ENCODE measurements at regions of chr1 and their contacts with region 1.

Region 1: GRCh38 chr1:201511941-201512539 is 5.1 kb upstream of the CSRP1 start:
- DNase-seq: no peak
- H3K4me3 ChIP-seq: no peak overlapping the region
- H3K27ac ChIP-seq: no peak overlapping the region
- H3K27me3 ChIP-seq: no peaks in the 10 kb centered on the region
- CTCF ChIP-seq: no peak

Region 2: DNA sequence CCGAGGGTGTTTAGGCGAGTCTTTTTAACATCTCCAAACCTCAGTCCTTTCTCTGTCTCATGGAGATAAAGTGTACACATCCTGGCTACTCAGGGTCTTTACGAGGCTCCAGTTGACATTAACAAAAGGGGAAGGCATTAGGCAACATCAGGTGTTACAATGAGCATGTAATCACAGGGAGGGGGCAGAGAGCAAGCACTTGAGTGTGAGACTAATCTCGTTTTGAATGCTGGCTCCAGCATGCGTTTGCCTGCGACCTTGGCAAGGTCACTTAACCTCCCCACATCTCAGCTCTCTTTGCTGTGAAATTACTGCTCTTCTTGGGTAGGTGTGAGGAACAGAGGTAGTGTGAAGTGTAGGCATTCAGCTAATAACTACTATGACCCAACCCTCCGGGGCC is 137.7 kb before region 1 on chr1:
- CTCF ChIA-PET with region 1: no interaction called
- POLR2A ChIA-PET with region 1: no interaction called
- DNase-seq: no peak
- H3K4me3 ChIP-seq: no peak overlapping the region
- H3K27ac ChIP-seq: no peak overlapping the region
- H3K27me3 ChIP-seq: peaks cover 53% of the 10 kb centered on the region
- CTCF ChIP-seq: no peak

Region 3: GRCh38 chr1:201436393-201436792 is 75.6 kb before region 1 on chr1:
- CTCF ChIA-PET with region 1: interaction called, 135 read pairs
- POLR2A ChIA-PET with region 1: interaction called, 4 read pairs
- DNase-seq: no peak
- H3K4me3 ChIP-seq: no peak overlapping the region
- H3K27ac ChIP-seq: no peak overlapping the region
- H3K27me3 ChIP-seq: peaks cover 4% of the 10 kb centered on the region
- CTCF ChIP-seq: peak; percentile 36

Region 4: GRCh38 chr1:201456499-201457309 is 55.3 kb before region 1 on chr1:
- CTCF ChIA-PET with region 1: interaction called, 20 read pairs
- POLR2A ChIA-PET with region 1: interaction called, 7 read pairs
- DNase-seq: peak; percentile 88
- H3K4me3 ChIP-seq: no peak overlapping the region; the same call in 1 of the 2 replicates
- H3K27ac ChIP-seq: peak overlapping the region; percentile 95
- H3K27me3 ChIP-seq: no peaks in the 10 kb centered on the region
- CTCF ChIP-seq: no peak

Region 5: GRCh38 chr1:201476670-201477344 is 35.2 kb before region 1 on chr1:
- CTCF ChIA-PET with region 1: interaction called, 307 read pairs
- POLR2A ChIA-PET with region 1: interaction called, 21 read pairs
- DNase-seq: no peak
- H3K4me3 ChIP-seq: no peak overlapping the region
- H3K27ac ChIP-seq: no peak overlapping the region
- H3K27me3 ChIP-seq: no peaks in the 10 kb centered on the region
- CTCF ChIP-seq: no peak

Region 6: DNA sequence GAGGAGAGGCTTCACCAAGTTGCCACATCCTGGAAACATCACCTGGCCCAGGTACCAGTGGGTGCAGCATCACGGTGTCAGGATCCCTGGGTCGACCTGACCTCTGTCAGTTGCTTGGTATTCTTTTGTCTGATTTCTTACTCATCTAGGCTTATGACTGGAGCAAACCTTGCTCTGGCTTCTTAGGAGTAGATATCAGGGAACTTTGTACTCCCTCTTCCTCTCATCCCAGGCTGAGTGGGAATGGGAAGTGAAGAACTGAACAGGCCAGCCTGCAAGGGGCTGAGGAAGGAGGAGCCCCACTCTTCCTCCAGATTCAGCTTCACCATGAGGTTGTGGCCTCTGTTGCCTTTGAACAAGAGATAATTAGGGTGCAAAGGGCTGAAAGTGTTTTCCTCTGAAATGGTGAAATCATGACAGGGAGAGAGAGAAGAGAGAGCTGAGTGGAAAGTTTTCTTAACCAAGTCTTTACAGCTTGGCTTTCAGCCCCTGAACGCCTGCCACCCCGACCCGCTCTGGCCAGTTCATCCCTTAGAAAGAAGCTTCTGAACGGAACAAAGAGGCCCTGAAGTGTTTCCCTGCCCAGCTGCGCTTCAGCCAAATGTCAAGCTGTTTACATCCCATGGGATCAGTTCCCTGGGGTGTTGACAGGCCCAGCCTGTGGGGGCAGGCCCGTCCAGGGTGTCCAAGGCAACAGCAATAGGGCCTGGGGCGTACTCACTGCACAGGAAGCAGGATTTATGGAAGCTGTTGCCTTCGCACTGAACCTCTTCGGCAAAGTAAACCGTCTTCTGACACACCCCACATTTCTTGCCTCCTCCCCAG is 16.4 kb before region 1 on chr1:
- CTCF ChIA-PET with region 1: interaction called, 307 read pairs
- POLR2A ChIA-PET with region 1: interaction called, 4 read pairs
- DNase-seq: no peak
- H3K4me3 ChIP-seq: peak overlapping the region; percentile 7; the same call in 1 of the 2 replicates
- H3K27ac ChIP-seq: peak overlapping the region; percentile 81
- H3K27me3 ChIP-seq: no peaks in the 10 kb centered on the region
- CTCF ChIP-seq: no peak

Region 7: DNA sequence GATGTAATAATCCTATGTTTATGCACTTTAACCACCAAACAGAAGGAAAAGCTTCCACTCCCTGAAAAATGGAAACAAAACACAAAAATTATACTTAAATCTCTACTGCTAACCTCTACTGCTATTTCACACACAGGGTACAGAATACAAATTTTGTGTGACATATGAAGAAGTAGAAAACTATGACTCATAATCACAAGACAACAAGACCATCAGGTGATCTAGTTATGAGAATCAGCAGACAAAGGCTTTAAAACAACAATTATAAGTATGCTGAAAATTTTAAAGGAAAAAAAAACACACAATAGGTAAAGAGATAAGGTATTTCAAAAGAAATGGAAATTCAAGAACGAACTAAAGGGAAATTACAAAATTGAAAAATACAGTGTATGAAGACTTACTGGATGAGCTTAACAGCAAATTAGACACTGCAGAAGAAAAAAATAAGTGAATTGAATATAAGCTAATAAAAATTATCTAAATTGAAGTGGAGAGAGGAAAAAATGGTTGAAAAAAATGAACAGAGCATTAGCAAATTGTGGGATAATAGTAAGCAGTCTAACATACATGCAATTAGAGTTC is 13.2 kb after region 1 on chr1:
- CTCF ChIA-PET with region 1: interaction called, 65 read pairs
- POLR2A ChIA-PET with region 1: interaction called, 7 read pairs
- DNase-seq: no peak
- H3K4me3 ChIP-seq: no peak overlapping the region
- H3K27ac ChIP-seq: no peak overlapping the region
- H3K27me3 ChIP-seq: no peaks in the 10 kb centered on the region
- CTCF ChIP-seq: no peak

Region 8: DNA sequence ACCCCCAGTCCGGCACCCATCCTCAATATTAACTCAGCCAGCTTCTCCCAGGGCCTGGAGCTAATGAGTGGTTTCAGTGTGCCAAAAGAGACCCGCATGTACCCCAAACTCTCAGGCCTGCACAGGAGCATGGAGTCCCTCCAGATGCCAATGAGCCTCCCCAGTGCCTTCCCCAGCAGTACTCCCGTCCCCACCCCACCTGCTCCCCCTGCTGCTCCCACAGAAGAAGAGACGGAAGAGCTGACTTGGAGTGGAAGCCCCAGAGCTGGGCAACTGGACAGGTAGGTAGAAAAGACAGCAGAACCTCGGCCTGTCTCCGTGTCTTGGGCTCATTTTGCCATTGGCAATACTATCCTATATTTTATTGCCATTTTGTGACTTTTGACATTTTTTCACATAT is 271.5 kb after region 1 on chr1:
- CTCF ChIA-PET with region 1: interaction called, 3 read pairs
- POLR2A ChIA-PET with region 1: interaction called, 10 read pairs
- DNase-seq: no peak
- H3K4me3 ChIP-seq: no peak overlapping the region
- H3K27ac ChIP-seq: no peak overlapping the region
- H3K27me3 ChIP-seq: no peaks in the 10 kb centered on the region
- CTCF ChIP-seq: peak; percentile 11; the same call in 1 of the 2 replicates

Measured in AG04450 (cell line).